ENCODE measurements at regions of chr4 and their contacts with region 1.

Region 1: DNA sequence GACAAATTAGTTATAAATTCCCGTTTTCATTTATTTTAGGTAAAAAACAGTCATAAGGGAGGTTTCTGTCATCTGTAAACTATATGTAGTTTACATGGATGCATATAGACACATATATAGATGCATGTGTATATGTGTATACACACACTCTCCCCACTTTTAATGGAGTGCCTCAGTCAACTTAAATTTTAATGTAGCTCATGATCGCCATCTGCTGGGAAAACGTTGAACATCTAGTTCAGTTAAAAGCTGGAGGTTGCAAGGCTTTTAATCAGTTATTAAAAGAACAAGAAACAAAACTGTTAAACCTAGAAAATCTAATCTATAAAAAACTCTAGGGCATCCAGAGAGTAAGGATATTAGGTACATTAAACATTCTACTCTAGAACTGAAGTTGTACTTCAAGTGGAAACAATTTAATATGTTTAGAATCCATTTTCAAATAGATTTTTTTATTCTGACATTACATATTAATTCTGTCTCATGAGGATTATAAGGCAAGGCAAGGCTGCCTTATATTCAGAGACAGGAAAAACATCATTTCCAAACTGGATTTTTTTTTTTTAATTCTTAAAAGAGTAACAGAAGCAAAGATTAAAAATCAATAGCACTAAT is 122.6 kb downstream of the SHISA3 start:
- DNase-seq: peak; percentile 78
- H3K4me3 ChIP-seq: no peak overlapping the region
- H3K27ac ChIP-seq: no peak overlapping the region
- H3K4me1 ChIP-seq: no peaks in the 10 kb centered on the region
- H3K27me3 ChIP-seq: no peaks in the 10 kb centered on the region
- CTCF ChIP-seq: peak; percentile 60 to 75 (median 64)
- POLR2A ChIP-seq: no peak

Region 2: GRCh38 chr4:42282081-42282901 is 237.6 kb before region 1 on chr4:
- intact Hi-C with region 1: loop called (anchors 5 kb)
- DNase-seq: peak; percentile 79
- H3K4me3 ChIP-seq: peak overlapping the region in 1 of 2 donors; percentile 9
- H3K27ac ChIP-seq: no peak overlapping the region
- H3K4me1 ChIP-seq: no peaks in the 10 kb centered on the region
- H3K27me3 ChIP-seq: no peaks in the 10 kb centered on the region
- CTCF ChIP-seq: peak; percentile 61 to 74 (median 72)
- POLR2A ChIP-seq: no peak

Region 3: DNA sequence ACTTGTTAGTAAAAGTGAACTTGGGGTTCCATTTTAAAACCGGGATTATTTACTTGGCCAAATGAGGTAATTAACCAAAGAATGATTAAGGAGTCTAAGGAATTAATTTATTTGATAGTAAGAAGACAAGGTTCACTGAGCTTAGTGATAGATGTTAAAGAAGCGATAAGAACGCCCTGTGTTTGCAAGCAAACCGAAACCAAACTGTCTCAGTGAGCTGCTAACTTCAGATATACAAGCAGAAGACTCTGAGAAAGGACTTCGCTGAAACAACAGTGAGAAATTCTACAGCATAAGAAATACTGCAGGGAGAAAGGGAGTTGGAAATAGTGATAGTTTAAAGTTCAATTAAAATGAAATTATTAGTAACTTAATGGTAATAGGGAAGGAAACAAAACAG is 160.2 kb before region 1 on chr4:
- intact Hi-C with region 1: loop called (anchors 10 kb)
- DNase-seq: no peak
- H3K4me3 ChIP-seq: no peak overlapping the region
- H3K27ac ChIP-seq: no peak overlapping the region
- H3K4me1 ChIP-seq: no peaks in the 10 kb centered on the region
- H3K27me3 ChIP-seq: no peaks in the 10 kb centered on the region
- CTCF ChIP-seq: no peak
- POLR2A ChIP-seq: no peak

Measured in testis (tissue), 5 donors.